A673 (cell line): ENCODE measurements at regions of chr15 and their contacts with region 1.

Region 1: GRCh38 chr15:70679919-70680231 is 83.5 kb downstream of the UACA start:
- DNase-seq: no peak
- H3K4me3 ChIP-seq: no peak overlapping the region
- H3K27ac ChIP-seq: no peak overlapping the region
- H3K4me1 ChIP-seq: no peaks in the 10 kb centered on the region
- H3K27me3 ChIP-seq: no peaks in the 10 kb centered on the region
- CTCF ChIP-seq: no peak

Region 2: DNA sequence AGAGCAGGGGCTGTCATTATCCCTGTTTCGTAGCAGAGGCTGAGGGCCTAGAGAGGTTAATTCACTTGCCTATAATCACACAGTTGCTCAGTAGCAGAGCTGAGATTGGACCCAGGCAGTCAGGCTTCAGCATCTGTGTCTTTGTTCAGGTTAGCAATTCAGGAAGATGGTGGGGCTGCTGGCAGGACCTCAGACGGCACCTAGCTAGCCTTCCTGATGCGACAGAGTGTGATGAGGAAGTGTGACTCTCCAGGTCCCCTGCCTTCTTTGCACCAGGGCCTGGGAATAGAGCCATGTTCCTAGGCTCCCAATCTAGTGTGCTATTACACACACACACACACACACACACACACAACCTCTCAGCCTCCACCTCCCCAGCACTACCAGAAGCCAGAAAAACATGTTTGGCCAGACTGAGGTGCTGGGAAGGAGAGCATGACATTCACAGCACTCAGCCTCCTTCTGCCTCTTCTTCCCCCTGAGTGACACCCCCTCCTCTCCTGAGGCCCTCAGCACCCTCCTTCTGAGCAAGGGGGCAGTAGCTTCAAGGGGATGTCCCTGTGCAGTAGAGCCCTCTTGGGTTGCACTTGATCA is 671.1 kb before region 1 on chr15:
- CTCF ChIA-PET with region 1: no interaction called
- POLR2A ChIA-PET with region 1: no interaction called
- intact Hi-C with region 1: no loop called
- DNase-seq: no peak
- H3K4me3 ChIP-seq: no peak overlapping the region
- H3K27ac ChIP-seq: no peak overlapping the region
- H3K4me1 ChIP-seq: peaks cover 9% of the 10 kb centered on the region
- H3K27me3 ChIP-seq: no peaks in the 10 kb centered on the region
- CTCF ChIP-seq: no peak

Region 3: GRCh38 chr15:70627734-70628548 is 51.9 kb before region 1 on chr15:
- CTCF ChIA-PET with region 1: no interaction called
- POLR2A ChIA-PET with region 1: no interaction called
- intact Hi-C with region 1: no loop called
- DNase-seq: peak; percentile 87
- H3K4me3 ChIP-seq: no peak overlapping the region
- H3K27ac ChIP-seq: no peak overlapping the region
- H3K4me1 ChIP-seq: peaks cover 9% of the 10 kb centered on the region
- H3K27me3 ChIP-seq: peaks cover 13% of the 10 kb centered on the region
- CTCF ChIP-seq: no peak

Region 4: DNA sequence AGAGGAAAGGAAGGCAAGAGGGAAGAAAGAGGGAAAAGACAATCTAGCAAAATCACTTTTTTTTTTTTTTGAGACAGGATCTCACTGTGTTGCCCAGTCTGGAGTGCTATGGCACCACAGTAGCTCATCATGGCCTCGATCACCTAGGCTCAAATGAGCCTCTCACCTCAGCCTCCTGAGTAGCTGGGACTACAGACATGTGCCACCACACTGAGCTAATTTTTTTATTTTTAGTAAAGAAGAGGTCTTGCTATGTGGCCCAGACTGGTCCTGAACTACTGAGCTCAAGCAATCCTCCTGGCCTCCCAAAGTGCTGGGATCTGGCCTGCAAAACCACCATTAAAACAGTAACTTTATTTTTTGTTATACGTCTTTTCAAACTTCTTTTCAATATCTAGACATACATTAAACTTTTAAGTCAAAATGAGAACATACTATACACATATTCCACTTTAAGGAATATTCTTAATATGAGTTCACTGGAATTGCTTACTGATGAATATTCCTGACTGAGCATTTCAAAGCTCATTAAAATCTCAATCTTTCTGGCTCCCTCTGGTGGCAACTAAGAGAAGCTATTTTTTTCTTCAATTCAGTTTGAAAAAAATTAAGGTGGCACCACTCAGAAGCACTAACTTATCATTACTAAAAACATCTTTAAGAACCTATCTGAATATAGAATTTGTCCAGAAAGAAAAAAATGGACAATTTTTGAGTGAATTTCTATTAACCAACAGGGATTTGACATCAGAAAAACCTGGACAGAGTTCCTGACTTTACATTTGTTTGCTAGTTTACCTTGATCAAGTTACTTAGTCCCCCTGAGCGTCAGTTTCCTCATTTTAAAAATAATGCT is 42.6 kb after region 1 on chr15:
- CTCF ChIA-PET with region 1: interaction called, 27 read pairs
- POLR2A ChIA-PET with region 1: no interaction called
- intact Hi-C with region 1: loop called (anchors 10 kb)
- DNase-seq: peak; percentile 62
- H3K4me3 ChIP-seq: no peak overlapping the region
- H3K27ac ChIP-seq: no peak overlapping the region
- H3K4me1 ChIP-seq: no peaks in the 10 kb centered on the region
- H3K27me3 ChIP-seq: no peaks in the 10 kb centered on the region
- CTCF ChIP-seq: peak; percentile 79

Region 5: GRCh38 chr15:70806992-70807712 is 127.3 kb after region 1 on chr15:
- CTCF ChIA-PET with region 1: interaction called, 13 read pairs
- POLR2A ChIA-PET with region 1: interaction called, 10 read pairs
- intact Hi-C with region 1: loop called (anchors 2 kb)
- DNase-seq: no peak
- H3K4me3 ChIP-seq: no peak overlapping the region
- H3K27ac ChIP-seq: no peak overlapping the region
- H3K4me1 ChIP-seq: no peaks in the 10 kb centered on the region
- H3K27me3 ChIP-seq: no peaks in the 10 kb centered on the region
- CTCF ChIP-seq: no peak

Region 6: DNA sequence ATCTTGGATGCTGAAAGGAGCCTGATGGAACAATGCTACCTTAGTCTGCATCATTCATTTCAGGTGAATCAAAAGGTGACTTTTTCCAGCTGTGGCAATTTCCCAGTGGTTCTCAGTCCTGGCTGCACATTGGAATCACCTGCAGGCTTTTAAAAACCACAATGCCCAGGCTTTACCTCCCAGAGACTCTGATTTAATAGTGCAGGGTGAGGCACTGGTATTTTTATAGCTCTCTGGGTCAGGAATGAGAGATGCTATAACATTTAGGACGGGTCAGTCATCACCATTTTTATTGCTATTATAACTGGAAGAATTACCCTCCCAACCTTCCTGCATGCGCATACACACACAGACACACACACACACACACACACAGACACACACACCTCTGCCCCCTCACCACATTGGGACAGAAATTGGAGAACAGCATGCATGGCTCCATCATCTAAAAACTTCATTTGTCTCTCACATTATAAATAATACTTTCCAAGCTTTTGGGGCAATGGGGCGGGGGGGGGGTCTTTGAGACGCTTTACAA is 133.0 kb after region 1 on chr15:
- CTCF ChIA-PET with region 1: interaction called, 13 read pairs
- POLR2A ChIA-PET with region 1: interaction called, 10 read pairs
- intact Hi-C with region 1: loop called (anchors 2 kb)
- DNase-seq: no peak
- H3K4me3 ChIP-seq: no peak overlapping the region
- H3K27ac ChIP-seq: no peak overlapping the region
- H3K4me1 ChIP-seq: no peaks in the 10 kb centered on the region
- H3K27me3 ChIP-seq: no peaks in the 10 kb centered on the region
- CTCF ChIP-seq: no peak

Region 7: DNA sequence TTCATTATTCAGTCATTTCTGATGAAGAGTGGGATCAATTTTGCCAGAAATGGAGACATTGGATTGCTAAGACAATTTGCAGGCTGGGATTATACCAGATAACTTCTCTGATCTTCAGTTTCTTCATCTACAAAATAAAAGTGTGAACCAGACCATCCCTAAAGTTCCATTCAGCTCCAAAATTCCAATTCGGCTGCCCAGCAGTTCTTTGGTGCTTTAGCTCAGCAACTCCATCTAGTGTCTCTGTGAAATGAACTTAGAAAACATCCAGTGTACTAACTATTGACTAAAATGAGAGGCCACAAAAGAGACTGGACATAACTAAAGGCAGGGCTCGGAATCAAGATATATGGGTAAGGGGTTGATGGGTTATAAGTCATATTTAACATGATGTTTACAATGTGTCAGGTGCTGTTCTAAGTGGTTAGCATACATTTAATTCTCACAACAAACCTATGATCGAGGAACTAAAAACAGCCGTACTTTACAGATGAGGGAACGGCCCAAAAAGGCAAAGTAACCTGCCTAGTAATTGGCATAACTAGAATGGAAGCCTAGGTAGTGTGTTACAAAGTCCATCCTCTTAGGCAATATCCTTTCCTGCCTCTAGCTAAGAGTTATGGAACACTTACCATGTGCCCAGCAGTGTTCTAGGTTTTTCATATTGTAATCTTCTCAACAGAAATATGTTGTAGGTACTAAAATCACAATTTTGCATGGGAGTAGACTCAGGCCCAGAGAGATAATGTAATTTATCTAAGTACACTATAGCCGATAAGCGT is 195.3 kb after region 1 on chr15:
- CTCF ChIA-PET with region 1: interaction called, 3 read pairs
- POLR2A ChIA-PET with region 1: no interaction called
- intact Hi-C with region 1: loop called (anchors 5 kb)
- DNase-seq: peak; percentile 49
- H3K4me3 ChIP-seq: no peak overlapping the region
- H3K27ac ChIP-seq: no peak overlapping the region
- H3K4me1 ChIP-seq: peaks cover 11% of the 10 kb centered on the region
- H3K27me3 ChIP-seq: no peaks in the 10 kb centered on the region
- CTCF ChIP-seq: peak; percentile 69

Region 8: GRCh38 chr15:71143373-71144310 is 463.8 kb after region 1 on chr15:
- CTCF ChIA-PET with region 1: no interaction called
- POLR2A ChIA-PET with region 1: interaction called, 14 read pairs
- intact Hi-C with region 1: no loop called
- DNase-seq: no peak
- H3K4me3 ChIP-seq: no peak overlapping the region
- H3K27ac ChIP-seq: no peak overlapping the region
- H3K4me1 ChIP-seq: peaks cover 13% of the 10 kb centered on the region
- H3K27me3 ChIP-seq: no peaks in the 10 kb centered on the region
- CTCF ChIP-seq: no peak